ENCODE measurements at regions of chr10 and their contacts with region 1.

Region 1: DNA sequence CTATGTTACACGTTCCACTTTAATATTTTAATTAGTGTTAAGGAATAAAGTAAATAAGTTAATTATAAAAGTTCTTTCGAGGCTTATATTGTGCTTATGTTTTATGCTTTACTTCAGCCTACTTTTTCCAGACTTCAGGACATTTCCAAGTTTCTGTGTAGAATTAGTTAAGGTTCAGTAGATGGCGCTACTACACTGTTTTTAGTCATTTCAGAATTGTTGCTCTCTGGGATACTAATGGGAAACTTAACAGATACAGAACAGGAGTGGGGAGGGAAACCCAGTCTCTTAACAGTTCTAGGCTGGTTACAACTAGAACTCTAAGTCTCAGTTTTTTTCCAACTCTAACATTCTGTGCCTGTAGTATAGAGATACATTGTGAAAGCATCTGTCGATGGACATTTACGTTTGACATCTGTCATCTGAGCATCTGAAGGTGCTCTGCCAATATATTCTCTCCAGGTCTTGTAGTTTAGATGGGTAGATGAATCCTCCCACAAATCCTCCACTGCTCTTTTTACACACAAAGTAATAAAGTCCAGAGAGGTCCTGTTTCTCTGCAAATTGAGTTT is 56.8 kb upstream of the FAM171A1 start:
- DNase-seq: no peak

Region 2: GRCh38 chr10:15395935-15396334 is 32.0 kb before region 1 on chr10:
- CTCF ChIA-PET with region 1: no interaction called
- POLR2A ChIA-PET with region 1: no interaction called
- DNase-seq: no peak

Region 3: GRCh38 chr10:15725603-15726002 is 297.7 kb after region 1 on chr10:
- CTCF ChIA-PET with region 1: interaction called, 11 read pairs
- POLR2A ChIA-PET with region 1: no interaction called
- DNase-seq: peak; percentile 69

Measured in HEK293T (cell line).